MCF 10A (cell line): ENCODE measurements at regions of chr16 and their contacts with region 1.

Region 1: DNA sequence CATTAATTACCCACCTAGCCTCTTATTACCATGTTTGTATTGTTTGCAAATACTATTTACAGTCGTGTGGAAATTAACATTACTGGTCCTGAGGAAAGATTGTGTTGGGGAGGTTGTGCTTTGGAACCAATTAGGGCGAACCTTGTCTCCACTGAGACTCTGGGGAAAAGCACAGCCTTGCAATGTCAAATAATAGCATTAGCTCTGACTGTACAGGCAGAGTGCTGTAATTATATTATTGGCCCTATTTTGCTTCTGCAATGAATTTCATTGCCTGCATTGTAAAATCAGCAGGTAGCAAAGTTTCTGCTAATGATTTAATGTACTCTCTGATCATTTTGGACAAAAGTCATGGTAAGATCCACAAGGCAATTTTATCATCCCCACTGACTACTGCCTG is 97.0 kb downstream of the WWOX start:
- DNase-seq: no peak
- H3K4me3 Mint-ChIP-seq: no peak overlapping the region
- H3K27ac Mint-ChIP-seq: no peak overlapping the region
- H3K4me1 Mint-ChIP-seq: no peaks in the 10 kb centered on the region
- H3K27me3 Mint-ChIP-seq: no peaks in the 10 kb centered on the region
- CTCF ChIP-seq: no peak

Region 2: GRCh38 chr16:77822661-77823060 is 373.8 kb before region 1 on chr16:
- CTCF ChIA-PET with region 1: no interaction called
- POLR2A ChIA-PET with region 1: no interaction called
- intact Hi-C with region 1: loop called (anchors 2 kb)
- DNase-seq: no peak
- H3K4me3 Mint-ChIP-seq: no peak overlapping the region
- H3K27ac Mint-ChIP-seq: no peak overlapping the region
- H3K4me1 Mint-ChIP-seq: no peaks in the 10 kb centered on the region
- H3K27me3 Mint-ChIP-seq: peaks cover 43% of the 10 kb centered on the region
- CTCF ChIP-seq: no peak

Region 3: GRCh38 chr16:78446992-78447563 is 250.6 kb after region 1 on chr16:
- CTCF ChIA-PET with region 1: no interaction called
- POLR2A ChIA-PET with region 1: no interaction called
- intact Hi-C with region 1: no loop called
- DNase-seq: no peak
- H3K4me3 Mint-ChIP-seq: no peak overlapping the region
- H3K27ac Mint-ChIP-seq: no peak overlapping the region
- H3K4me1 Mint-ChIP-seq: no peaks in the 10 kb centered on the region
- H3K27me3 Mint-ChIP-seq: no peaks in the 10 kb centered on the region
- CTCF ChIP-seq: no peak